HepG2 (cell line): ENCODE measurements at regions of chr2 and their contacts with region 1.

Region 1: GRCh38 chr2:109613922-109614714 is at the starts of genes SEPTIN10 and SOWAHC:
- DNase-seq: peak; percentile 98
- ATAC-seq: peak; percentile 88
- H3K4me3 ChIP-seq: peak within 1 kb of the TSS; percentile 78 to 100 (median 94)
- H3K27ac ChIP-seq: peak within 1 kb of the TSS; percentile 88
- H3K4me1 ChIP-seq: peaks cover 59% of the 10 kb centered on the region
- H3K27me3 ChIP-seq: no peaks in the 10 kb centered on the region; a peak in 1 of 5 replicates
- CTCF ChIP-seq: peak; percentile 25; the same call in 1 of the 2 replicates
- EP300 ChIP-seq: peak in 1 of 2 experiments; percentile 19; a peak in 1 of 4 replicates
- POLR2A ChIP-seq: peak in 1 of 2 experiments; percentile 90; a peak in 2 of 4 replicates
- RAD21 ChIP-seq: peak; percentile 86
- total RNA-seq, gene SEPTIN10: 67.5 and 99.8 TPM in 2 replicates
- total RNA-seq, gene SOWAHC: 22.5 and 24.7 TPM in 2 replicates

Region 2: DNA sequence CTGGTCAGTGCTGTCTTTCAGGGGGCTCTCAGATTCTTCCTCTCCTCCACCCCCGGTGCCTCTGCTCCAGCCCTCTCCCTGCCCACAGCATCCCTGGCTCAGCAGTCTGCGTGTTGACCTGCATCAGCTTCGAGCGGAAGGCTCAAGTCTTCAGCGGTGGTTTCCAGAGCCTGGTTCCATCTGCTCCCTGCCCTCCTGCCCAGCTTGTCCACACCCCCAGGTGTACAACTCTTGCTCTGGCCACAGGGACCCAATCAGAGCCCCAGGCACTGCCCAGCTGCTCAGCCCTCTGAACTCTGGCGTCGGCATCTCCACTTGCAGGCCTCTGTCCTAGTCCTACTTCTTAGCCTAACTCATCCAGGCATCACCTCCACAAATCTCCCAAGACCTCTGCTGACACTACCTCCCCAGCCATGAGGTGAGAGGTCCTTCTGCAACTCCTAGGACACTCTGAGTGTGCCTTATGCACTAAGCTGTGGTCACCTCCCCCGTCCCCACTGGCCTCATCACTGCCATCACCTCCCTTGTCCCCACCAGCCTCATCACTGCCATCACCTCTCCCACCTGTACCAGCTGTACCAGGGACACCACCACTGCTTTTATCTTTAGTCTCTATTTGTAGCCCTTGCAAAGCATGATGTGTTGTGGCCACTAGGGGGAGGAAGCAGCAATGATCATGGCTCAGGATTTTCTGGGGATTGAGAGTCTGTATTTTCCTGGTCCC is 686.0 kb before region 1 on chr2:
- CTCF ChIA-PET with region 1: no interaction called
- POLR2A ChIA-PET with region 1: no interaction called
- in situ Hi-C with region 1: no loop called
- intact Hi-C with region 1: no loop called
- DNase-seq: peak; percentile 51
- ATAC-seq: peak; percentile 81
- H3K4me3 ChIP-seq: no peak overlapping the region
- H3K27ac ChIP-seq: no peak overlapping the region
- H3K4me1 ChIP-seq: 0 out of 2 replicates have a peak, but pooled peaks cover 3% of the 10 kb centered on the region
- H3K27me3 ChIP-seq: peaks cover 3 to 58% of the 10 kb centered on the region in 2 experiments; a peak in 4 of 5 replicates
- CTCF ChIP-seq: peak; percentile 90
- EP300 ChIP-seq: no peak
- POLR2A ChIP-seq: no peak
- RAD21 ChIP-seq: peak; percentile 62

Region 3: DNA sequence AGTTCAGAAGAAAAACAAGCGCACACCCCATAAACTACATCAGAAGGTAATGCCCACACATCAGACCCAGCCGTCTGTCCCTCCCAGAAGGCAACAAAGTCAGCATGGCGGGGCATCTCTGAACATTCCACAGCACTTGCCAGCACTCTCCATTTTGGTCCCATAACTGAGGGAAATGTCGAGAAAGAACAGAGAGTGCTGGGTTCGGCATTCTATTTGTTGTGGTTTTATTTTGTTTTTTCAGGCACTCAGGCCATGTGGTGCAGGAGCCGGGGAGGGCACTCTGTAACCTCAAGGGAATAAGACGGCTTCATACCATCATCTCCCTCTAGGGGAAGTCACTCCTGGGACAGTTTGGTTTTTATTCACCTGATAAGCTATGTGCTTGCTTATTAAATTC is 156.3 kb before region 1 on chr2:
- CTCF ChIA-PET with region 1: no interaction called
- POLR2A ChIA-PET with region 1: no interaction called
- in situ Hi-C with region 1: no loop called
- intact Hi-C with region 1: no loop called
- DNase-seq: no peak
- ATAC-seq: peak; percentile 42; the same call in 2 of the 3 replicates
- H3K4me3 ChIP-seq: no peak overlapping the region
- H3K27ac ChIP-seq: no peak overlapping the region
- H3K4me1 ChIP-seq: no peaks in the 10 kb centered on the region
- H3K27me3 ChIP-seq: no peaks in the 10 kb centered on the region
- CTCF ChIP-seq: no peak
- EP300 ChIP-seq: no peak
- POLR2A ChIP-seq: no peak
- RAD21 ChIP-seq: no peak

Region 4: GRCh38 chr2:109558076-109558882 is 55.8 kb before region 1 on chr2:
- CTCF ChIA-PET with region 1: no interaction called
- POLR2A ChIA-PET with region 1: no interaction called
- in situ Hi-C with region 1: no loop called
- intact Hi-C with region 1: loop called (anchors 1 kb)
- DNase-seq: peak; percentile 96
- ATAC-seq: peak; percentile 82
- H3K4me3 ChIP-seq: no peak overlapping the region
- H3K27ac ChIP-seq: peak overlapping the region; percentile 71
- H3K4me1 ChIP-seq: peaks cover 40% of the 10 kb centered on the region
- H3K27me3 ChIP-seq: no peaks in the 10 kb centered on the region
- CTCF ChIP-seq: no peak
- EP300 ChIP-seq: peak; percentile 69 to 91; a peak in 3 of 4 replicates
- POLR2A ChIP-seq: no peak
- RAD21 ChIP-seq: no peak

Region 5: GRCh38 chr2:109632158-109632789 is 18.2 kb after region 1 on chr2:
- CTCF ChIA-PET with region 1: interaction called, 5 read pairs
- POLR2A ChIA-PET with region 1: interaction called, 43 read pairs
- in situ Hi-C with region 1: no loop called
- intact Hi-C with region 1: loop called (anchors 1 kb)
- DNase-seq: peak; percentile 86
- ATAC-seq: peak; percentile 55
- H3K4me3 ChIP-seq: peak overlapping the region in 1 of 3 experiments; percentile 24; a peak in 2 of 6 replicates
- H3K27ac ChIP-seq: peak overlapping the region; percentile 68
- H3K4me1 ChIP-seq: peaks cover 74% of the 10 kb centered on the region
- H3K27me3 ChIP-seq: no peaks in the 10 kb centered on the region
- CTCF ChIP-seq: no peak; the same call in 1 of the 2 replicates
- EP300 ChIP-seq: peak; percentile 18 to 65; a peak in 1 of 4 replicates
- POLR2A ChIP-seq: no peak
- RAD21 ChIP-seq: no peak

Region 6: GRCh38 chr2:109644576-109645275 is 30.6 kb after region 1 on chr2:
- CTCF ChIA-PET with region 1: no interaction called
- POLR2A ChIA-PET with region 1: interaction called, 132 read pairs
- in situ Hi-C with region 1: no loop called
- intact Hi-C with region 1: loop called (anchors 1 kb)
- DNase-seq: peak; percentile 100
- ATAC-seq: peak; percentile 95
- H3K4me3 ChIP-seq: peak overlapping the region; percentile 25 to 58 (median 25); a peak in 5 of 6 replicates
- H3K27ac ChIP-seq: peak overlapping the region; percentile 98
- H3K4me1 ChIP-seq: peaks cover 84% of the 10 kb centered on the region
- H3K27me3 ChIP-seq: no peaks in the 10 kb centered on the region
- CTCF ChIP-seq: peak; percentile 22; the same call in 1 of the 2 replicates
- EP300 ChIP-seq: peak; percentile 99 to 100
- POLR2A ChIP-seq: peak; percentile 79 to 84
- RAD21 ChIP-seq: peak; percentile 50

Region 7: DNA sequence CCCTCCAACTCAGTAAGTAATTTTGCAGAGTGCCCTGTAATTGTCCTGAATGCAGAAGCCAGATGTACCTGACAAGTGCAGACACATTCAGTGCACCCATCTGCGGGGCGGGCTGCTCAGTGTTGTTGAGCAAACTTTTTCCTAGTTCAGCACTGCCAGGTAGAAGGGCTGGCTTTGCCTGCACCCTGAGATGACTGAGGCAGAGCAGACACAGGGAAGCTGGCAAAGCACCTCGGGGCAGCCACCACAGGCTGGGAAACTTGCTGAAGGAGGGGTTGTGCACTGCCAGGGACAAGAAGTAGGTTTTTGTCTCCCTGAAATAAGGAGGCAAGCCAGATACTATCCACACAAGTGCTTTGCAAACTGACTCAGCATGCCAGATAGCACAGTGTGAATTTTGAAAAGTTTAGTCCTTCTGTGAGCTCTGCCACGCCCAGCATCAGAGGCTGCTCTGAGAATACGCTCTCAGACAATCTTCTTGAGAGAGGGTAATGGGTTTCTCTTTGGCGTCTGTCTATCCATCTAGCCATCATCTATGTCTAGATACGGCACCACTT is 62.3 kb after region 1 on chr2:
- CTCF ChIA-PET with region 1: no interaction called
- POLR2A ChIA-PET with region 1: interaction called, 26 read pairs
- in situ Hi-C with region 1: no loop called
- intact Hi-C with region 1: no loop called
- DNase-seq: no peak
- ATAC-seq: peak; percentile 21
- H3K4me3 ChIP-seq: peak overlapping the region in 2 of 3 experiments; percentile 9 to 50; a peak in 2 of 6 replicates
- H3K27ac ChIP-seq: peak overlapping the region; percentile 70
- H3K4me1 ChIP-seq: peaks cover 81% of the 10 kb centered on the region
- H3K27me3 ChIP-seq: no peaks in the 10 kb centered on the region
- CTCF ChIP-seq: no peak
- EP300 ChIP-seq: no peak
- POLR2A ChIP-seq: peak in 1 of 2 experiments; percentile 12; a peak in 1 of 4 replicates
- RAD21 ChIP-seq: no peak

Region 8: GRCh38 chr2:109699646-109700045 is 85.5 kb after region 1 on chr2:
- CTCF ChIA-PET with region 1: no interaction called
- POLR2A ChIA-PET with region 1: interaction called, 13 read pairs
- in situ Hi-C with region 1: no loop called
- intact Hi-C with region 1: no loop called
- DNase-seq: no peak
- ATAC-seq: peak; percentile 20; the same call in 2 of the 3 replicates
- H3K4me3 ChIP-seq: no peak overlapping the region
- H3K27ac ChIP-seq: no peak overlapping the region
- H3K4me1 ChIP-seq: peaks cover 65% of the 10 kb centered on the region
- H3K27me3 ChIP-seq: no peaks in the 10 kb centered on the region
- CTCF ChIP-seq: no peak
- EP300 ChIP-seq: no peak
- POLR2A ChIP-seq: no peak
- RAD21 ChIP-seq: no peak